Testis (tissue), 5 donors: ENCODE measurements at regions of chr4 and their contacts with region 1.

Region 1: GRCh38 chr4:158850800-158851644 is 82.2 kb downstream of the FNIP2 start:
- DNase-seq: no peak
- H3K4me3 ChIP-seq: no peak overlapping the region
- H3K27ac ChIP-seq: no peak overlapping the region
- H3K4me1 ChIP-seq: no peaks in the 10 kb centered on the region
- H3K27me3 ChIP-seq: no peaks in the 10 kb centered on the region
- CTCF ChIP-seq: peak; percentile 42 to 79 (median 48)
- POLR2A ChIP-seq: no peak

Region 2: GRCh38 chr4:158682066-158682465 is 169.0 kb before region 1 on chr4:
- intact Hi-C with region 1: no loop called
- DNase-seq: no peak
- H3K4me3 ChIP-seq: no peak overlapping the region
- H3K27ac ChIP-seq: no peak overlapping the region
- H3K4me1 ChIP-seq: no peaks in the 10 kb centered on the region
- H3K27me3 ChIP-seq: no peaks in the 10 kb centered on the region
- CTCF ChIP-seq: no peak
- POLR2A ChIP-seq: no peak

Region 3: DNA sequence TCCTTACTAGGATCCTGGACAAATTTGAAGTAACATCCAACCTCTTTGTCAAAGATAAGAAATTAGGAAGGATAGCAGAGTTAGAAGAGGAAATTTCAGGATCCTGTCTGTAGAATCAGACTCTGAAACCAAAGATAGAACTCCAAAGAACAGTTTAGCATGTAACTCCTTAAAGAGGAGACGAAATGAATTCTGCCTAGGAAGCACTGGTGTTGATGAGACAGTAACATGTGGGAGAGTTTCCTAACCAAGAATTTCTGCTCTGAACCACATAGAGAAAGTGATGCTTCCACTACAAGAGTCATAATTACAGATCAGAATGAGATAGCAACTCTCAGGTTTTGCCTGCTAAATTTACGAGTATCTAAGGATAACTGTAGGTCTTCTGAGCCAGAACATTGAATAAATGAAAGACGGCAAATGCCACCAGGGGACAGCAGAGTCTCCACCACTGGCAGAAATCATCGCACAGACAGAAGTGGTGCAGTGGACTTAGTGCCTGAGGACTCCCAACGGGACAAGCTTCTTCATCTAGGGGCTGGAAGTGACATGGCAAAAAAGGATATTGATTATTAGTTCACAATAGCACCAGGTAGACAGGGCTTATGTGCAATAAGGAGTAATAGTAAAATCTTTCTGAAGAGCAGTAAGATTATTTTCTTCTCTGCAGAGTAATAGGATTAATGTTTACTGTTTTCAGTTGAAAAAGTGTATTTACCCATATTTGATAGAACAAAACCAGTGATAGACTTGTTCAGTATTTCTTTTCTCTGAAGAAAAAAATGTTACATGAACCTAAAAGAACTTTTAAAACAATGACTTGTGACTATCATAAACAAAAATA is 121.1 kb before region 1 on chr4:
- intact Hi-C with region 1: loop called (anchors 5 kb)
- DNase-seq: peak; percentile 77
- H3K4me3 ChIP-seq: no peak overlapping the region
- H3K27ac ChIP-seq: no peak overlapping the region
- H3K4me1 ChIP-seq: no peaks in the 10 kb centered on the region
- H3K27me3 ChIP-seq: no peaks in the 10 kb centered on the region
- CTCF ChIP-seq: peak; percentile 53 to 80 (median 79)
- POLR2A ChIP-seq: no peak